GM12878 (cell line): ENCODE measurements at regions of chr2 and their contacts with region 1.

Region 1: DNA sequence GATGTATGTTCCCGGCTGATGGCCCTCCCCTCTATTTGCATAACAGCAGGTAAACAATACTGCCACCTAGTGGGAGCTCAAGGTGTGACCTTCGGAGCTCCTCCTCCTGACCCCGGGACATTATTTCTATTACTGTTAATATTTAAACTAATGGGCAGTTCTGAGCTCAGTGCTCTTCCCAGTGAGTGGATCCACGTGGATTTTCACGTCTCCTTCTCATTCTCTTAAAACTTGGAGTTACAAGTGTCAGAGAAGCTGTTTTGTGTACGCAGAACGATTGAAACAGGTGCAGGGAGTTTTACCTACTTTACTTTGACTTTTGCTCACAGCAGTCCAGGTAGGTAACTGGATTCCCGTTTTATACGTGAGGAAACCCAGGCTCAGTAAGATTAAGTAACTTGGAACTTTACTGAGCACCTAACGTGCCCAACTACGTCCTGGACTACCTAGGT is 127.3 kb downstream of the PRKCE start:
- DNase-seq: peak; percentile 11
- ATAC-seq: peak; percentile 90
- H3K4me3 ChIP-seq: no peak overlapping the region
- H3K27ac ChIP-seq: no peak overlapping the region
- H3K4me1 ChIP-seq: peaks cover 16% of the 10 kb centered on the region
- H3K27me3 ChIP-seq: no peaks in the 10 kb centered on the region
- CTCF ChIP-seq: peak; percentile 49 to 60 (median 53); a peak in 5 of 6 replicates
- EP300 ChIP-seq: no peak
- POLR2A ChIP-seq: no peak
- RAD21 ChIP-seq: peak; percentile 72

Region 2: DNA sequence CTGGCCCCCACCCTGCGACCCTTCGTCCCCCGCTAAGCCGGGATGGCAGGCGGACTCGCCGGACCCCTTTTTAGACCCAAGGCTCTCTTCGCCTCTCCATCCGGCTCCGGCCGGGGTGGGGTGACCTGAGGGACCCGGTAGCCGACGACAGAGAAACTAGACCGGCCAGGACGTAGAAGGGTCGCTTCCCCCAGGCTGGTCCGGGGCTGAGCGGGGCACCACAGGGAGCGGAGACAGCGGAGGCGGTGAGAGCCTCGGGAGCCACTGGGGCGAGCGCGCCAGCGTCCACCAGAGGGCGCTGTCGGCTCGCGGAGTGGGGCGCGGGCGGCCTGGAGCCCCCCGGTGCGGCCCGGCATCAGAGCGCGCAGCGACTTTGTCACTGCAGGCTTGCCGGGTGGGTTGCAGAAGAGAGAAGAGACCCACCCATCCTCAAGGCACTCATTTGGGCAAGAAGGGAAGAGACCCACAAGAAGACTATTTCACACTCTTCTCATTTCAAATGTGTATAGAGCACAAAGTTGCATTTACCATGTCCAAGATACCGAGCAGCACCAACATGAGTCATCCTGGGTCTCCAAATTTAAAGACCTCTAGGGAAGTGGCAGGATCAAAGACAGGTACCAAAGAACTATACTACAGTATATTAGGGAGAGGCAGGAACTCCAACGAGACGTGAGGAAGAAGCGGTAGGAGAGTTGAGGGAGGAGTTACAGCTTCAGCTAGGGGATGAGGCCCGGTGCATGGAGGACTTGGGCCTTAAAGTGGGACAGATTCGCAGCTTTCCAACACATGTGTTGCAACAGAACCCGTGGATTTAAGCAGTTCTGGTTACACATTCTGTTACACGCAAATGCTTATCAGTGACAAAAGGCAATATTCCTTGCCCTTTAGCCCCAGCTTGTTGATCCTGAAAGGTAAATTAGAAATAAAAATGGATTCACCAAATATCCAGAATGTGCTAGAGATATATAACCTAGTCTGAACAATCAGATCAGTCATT is 134.9 kb before region 1 on chr2:
- CTCF ChIA-PET with region 1: interaction called, 24 read pairs
- POLR2A ChIA-PET with region 1: interaction called, 8 read pairs
- RAD21 ChIA-PET with region 1: interaction called, 21 read pairs
- SMC1A ChIA-PET with region 1: interaction called, 33 read pairs
- in situ Hi-C with region 1: loop called (anchors 5 kb)
- intact Hi-C with region 1: no loop called
- DNase-seq: no peak
- ATAC-seq: peak; percentile 99
- H3K4me3 ChIP-seq: peak overlapping the region; percentile 69; the same call in 1 of the 2 replicates
- H3K27ac ChIP-seq: no peak overlapping the region
- H3K4me1 ChIP-seq: no peaks in the 10 kb centered on the region
- H3K27me3 ChIP-seq: no peaks in the 10 kb centered on the region; a peak in 1 of 4 replicates
- CTCF ChIP-seq: peak; percentile 80 to 84 (median 81)
- EP300 ChIP-seq: no peak
- POLR2A ChIP-seq: no peak
- RAD21 ChIP-seq: peak; percentile 93

Region 3: DNA sequence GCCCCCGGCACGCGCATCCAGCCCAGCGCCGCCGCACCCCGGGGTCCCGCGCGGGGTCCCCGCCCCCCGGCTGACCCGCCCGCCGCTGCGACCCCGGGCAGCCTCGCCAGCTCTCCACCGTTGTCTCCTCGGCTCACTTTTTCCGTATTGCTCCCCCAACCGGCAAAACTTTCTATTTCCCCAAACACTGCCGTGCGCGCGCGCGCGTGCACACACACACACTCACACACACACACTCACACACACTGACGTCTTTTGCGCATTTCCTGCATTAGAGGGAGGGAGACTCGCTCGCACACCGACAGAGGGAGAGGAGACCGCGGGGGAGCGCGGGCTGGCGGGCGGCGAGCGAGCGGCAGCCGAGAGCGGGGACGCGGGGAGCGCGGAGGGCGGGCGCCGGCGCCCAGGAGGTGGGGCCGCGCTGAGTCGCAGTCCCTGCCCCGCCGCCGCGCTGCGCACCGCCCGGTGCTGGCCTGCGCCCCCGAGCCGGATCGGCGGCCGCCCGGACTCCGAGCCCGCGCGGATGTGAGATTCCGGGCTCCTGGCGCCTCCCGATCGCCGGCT is 127.8 kb before region 1 on chr2:
- CTCF ChIA-PET with region 1: interaction called, 98 read pairs
- POLR2A ChIA-PET with region 1: interaction called, 5 read pairs
- RAD21 ChIA-PET with region 1: interaction called, 27 read pairs
- SMC1A ChIA-PET with region 1: interaction called, 33 read pairs
- in situ Hi-C with region 1: loop called (anchors 5 kb)
- intact Hi-C with region 1: loop called (anchors 1 kb)
- DNase-seq: peak; percentile 76
- ATAC-seq: peak; percentile 79
- H3K4me3 ChIP-seq: peak overlapping the region; percentile 97
- H3K27ac ChIP-seq: peak overlapping the region; percentile 91
- H3K4me1 ChIP-seq: no peaks in the 10 kb centered on the region
- H3K27me3 ChIP-seq: no peaks in the 10 kb centered on the region
- CTCF ChIP-seq: peak; percentile 38 to 49 (median 48); a peak in 5 of 6 replicates
- EP300 ChIP-seq: peak; percentile 56 to 69; a peak in 1 of 4 replicates
- POLR2A ChIP-seq: peak; percentile 85
- RAD21 ChIP-seq: peak; percentile 57

Region 4: DNA sequence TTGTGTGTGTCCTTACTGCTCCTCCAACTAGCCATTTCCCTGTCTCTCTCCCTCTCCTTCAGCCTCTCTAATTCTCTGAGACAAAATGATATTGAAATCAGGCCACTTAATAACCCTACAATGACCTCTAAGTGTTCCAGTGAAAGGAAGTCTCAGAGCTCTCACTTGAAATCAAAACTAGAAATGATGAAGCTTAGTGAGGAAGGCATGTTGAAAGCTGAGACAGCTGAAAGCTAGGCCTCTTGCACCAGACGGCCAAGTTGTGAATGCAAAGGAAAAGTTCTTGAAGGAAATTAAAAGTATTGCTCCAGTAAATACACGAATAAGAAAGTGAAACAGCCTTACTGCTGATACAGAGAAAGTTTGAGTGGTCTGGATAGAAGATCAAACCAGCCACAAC is 54.4 kb before region 1 on chr2:
- CTCF ChIA-PET with region 1: interaction called, 37 read pairs
- POLR2A ChIA-PET with region 1: no interaction called
- RAD21 ChIA-PET with region 1: interaction called, 9 read pairs
- SMC1A ChIA-PET with region 1: interaction called, 22 read pairs
- in situ Hi-C with region 1: no loop called
- intact Hi-C with region 1: no loop called
- DNase-seq: no peak
- ATAC-seq: peak; percentile 3; the same call in 1 of the 3 replicates
- H3K4me3 ChIP-seq: no peak overlapping the region
- H3K27ac ChIP-seq: peak overlapping the region; percentile 54
- H3K4me1 ChIP-seq: peaks cover 50% of the 10 kb centered on the region
- H3K27me3 ChIP-seq: no peaks in the 10 kb centered on the region
- CTCF ChIP-seq: no peak
- EP300 ChIP-seq: no peak
- POLR2A ChIP-seq: no peak
- RAD21 ChIP-seq: no peak

Region 5: GRCh38 chr2:45765728-45766254 is 13.0 kb before region 1 on chr2:
- CTCF ChIA-PET with region 1: interaction called, 10 read pairs
- POLR2A ChIA-PET with region 1: no interaction called
- RAD21 ChIA-PET with region 1: no interaction called
- SMC1A ChIA-PET with region 1: interaction called, 12 read pairs
- in situ Hi-C with region 1: no loop called
- intact Hi-C with region 1: no loop called
- DNase-seq: no peak
- ATAC-seq: no peak; the same call in 2 of the 3 replicates
- H3K4me3 ChIP-seq: no peak overlapping the region
- H3K27ac ChIP-seq: no peak overlapping the region; the same call in 1 of the 2 replicates
- H3K4me1 ChIP-seq: peaks cover 15% of the 10 kb centered on the region
- H3K27me3 ChIP-seq: no peaks in the 10 kb centered on the region
- CTCF ChIP-seq: no peak
- EP300 ChIP-seq: no peak
- POLR2A ChIP-seq: no peak
- RAD21 ChIP-seq: no peak

Region 6: DNA sequence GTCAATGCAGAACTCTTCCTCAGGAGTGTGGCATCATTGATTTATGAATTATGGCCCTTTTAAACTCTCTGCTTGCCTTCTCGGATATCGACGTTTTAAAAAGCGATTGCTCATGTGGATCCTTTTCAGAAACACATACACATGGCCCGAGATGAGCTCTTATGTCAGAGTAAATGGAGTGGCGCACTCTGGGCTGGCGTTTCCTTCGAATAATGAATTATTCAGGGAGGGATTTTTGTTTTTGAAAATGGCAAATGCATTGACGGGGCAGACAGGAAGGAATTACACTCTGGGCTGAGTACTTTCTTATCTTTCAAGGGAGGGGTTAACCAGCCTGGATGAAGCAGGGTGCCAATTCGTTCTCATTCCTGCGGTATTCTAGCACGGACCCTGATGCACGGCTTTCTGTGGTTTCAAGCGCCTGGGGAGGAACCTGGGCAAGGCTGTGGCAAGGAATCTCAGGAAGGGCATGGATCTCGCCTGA is 15.4 kb after region 1 on chr2:
- CTCF ChIA-PET with region 1: interaction called, 40 read pairs
- POLR2A ChIA-PET with region 1: no interaction called
- RAD21 ChIA-PET with region 1: interaction called, 6 read pairs
- SMC1A ChIA-PET with region 1: interaction called, 43 read pairs
- in situ Hi-C with region 1: no loop called
- intact Hi-C with region 1: no loop called
- DNase-seq: no peak
- ATAC-seq: no peak
- H3K4me3 ChIP-seq: no peak overlapping the region
- H3K27ac ChIP-seq: no peak overlapping the region
- H3K4me1 ChIP-seq: peaks cover 3% of the 10 kb centered on the region
- H3K27me3 ChIP-seq: no peaks in the 10 kb centered on the region
- CTCF ChIP-seq: no peak
- EP300 ChIP-seq: no peak
- POLR2A ChIP-seq: no peak
- RAD21 ChIP-seq: no peak

Region 7: DNA sequence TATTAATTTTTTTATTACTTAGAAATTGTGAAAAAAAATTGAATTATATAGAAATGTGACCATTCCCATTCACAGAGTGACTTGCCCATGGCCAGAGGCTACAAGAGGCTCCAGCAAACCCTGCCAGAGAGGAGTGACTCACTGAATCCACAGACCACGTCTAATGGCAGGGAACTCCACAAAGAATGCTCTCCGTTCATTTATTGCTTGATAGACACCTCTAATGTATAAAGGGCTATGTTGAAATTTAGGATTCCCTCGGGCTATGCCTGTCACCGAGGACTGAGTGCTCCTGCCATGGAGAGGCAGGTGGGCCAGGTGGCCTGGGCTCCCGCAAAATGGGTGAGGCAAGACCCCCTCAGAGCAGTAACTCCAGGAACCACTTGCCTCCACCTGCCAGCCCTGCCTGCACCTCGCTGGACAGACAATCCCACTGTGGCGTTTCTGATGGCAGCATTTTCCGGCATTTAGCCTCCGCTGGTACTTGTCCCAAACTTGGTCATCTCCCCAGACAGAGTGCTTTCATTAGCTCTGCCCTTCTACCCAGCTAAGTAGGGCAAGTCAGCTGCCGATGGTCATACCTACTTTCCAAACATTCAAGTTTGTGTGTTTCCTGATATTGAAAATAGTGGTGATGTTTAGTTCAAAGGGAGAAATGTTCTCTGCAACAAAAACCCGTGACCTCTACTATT is 73.0 kb after region 1 on chr2:
- CTCF ChIA-PET with region 1: interaction called, 3 read pairs
- POLR2A ChIA-PET with region 1: no interaction called
- RAD21 ChIA-PET with region 1: interaction called, 4 read pairs
- SMC1A ChIA-PET with region 1: interaction called, 10 read pairs
- in situ Hi-C with region 1: no loop called
- intact Hi-C with region 1: no loop called
- DNase-seq: no peak
- ATAC-seq: no peak
- H3K4me3 ChIP-seq: no peak overlapping the region
- H3K27ac ChIP-seq: no peak overlapping the region
- H3K4me1 ChIP-seq: peaks cover 27% of the 10 kb centered on the region
- H3K27me3 ChIP-seq: no peaks in the 10 kb centered on the region
- CTCF ChIP-seq: no peak
- EP300 ChIP-seq: no peak
- POLR2A ChIP-seq: no peak
- RAD21 ChIP-seq: no peak